Activated naive CD4-positive, alpha-beta T cell treated with anti-CD3 and anti-CD28 coated beads, Interleukin-2, amount 10 ng/mL, durations not matched to agents 7 days and 5 days (primary cell): ENCODE measurements at regions of chrX and their contacts with region 1.

Region 1: GRCh38 chrX:109485470-109486340 is 3.8 kb upstream of the GUCY2F start:
- DNase-seq: peak; percentile 68
- H3K4me3 Mint-ChIP-seq: no peak overlapping the region
- H3K27ac Mint-ChIP-seq: no peak overlapping the region
- H3K4me1 Mint-ChIP-seq: no peaks in the 10 kb centered on the region
- H3K27me3 Mint-ChIP-seq: peaks cover 4% of the 10 kb centered on the region

Region 2: GRCh38 chrX:109398833-109399232 is 86.9 kb before region 1 on chrX:
- CTCF ChIA-PET with region 1: no interaction called
- DNase-seq: no peak
- H3K4me3 Mint-ChIP-seq: no peak overlapping the region
- H3K27ac Mint-ChIP-seq: no peak overlapping the region
- H3K4me1 Mint-ChIP-seq: no peaks in the 10 kb centered on the region
- H3K27me3 Mint-ChIP-seq: no peaks in the 10 kb centered on the region

Region 3: GRCh38 chrX:109475174-109475891 is 10.4 kb before region 1 on chrX:
- CTCF ChIA-PET with region 1: interaction called, 10 read pairs
- DNase-seq: no peak
- H3K4me3 Mint-ChIP-seq: no peak overlapping the region
- H3K27ac Mint-ChIP-seq: no peak overlapping the region
- H3K4me1 Mint-ChIP-seq: peaks cover 2% of the 10 kb centered on the region
- H3K27me3 Mint-ChIP-seq: no peaks in the 10 kb centered on the region

Region 4: GRCh38 chrX:109635176-109635575 is 149.5 kb after region 1 on chrX:
- CTCF ChIA-PET with region 1: interaction called, 17 read pairs
- DNase-seq: peak; percentile 20
- H3K4me3 Mint-ChIP-seq: no peak overlapping the region
- H3K27ac Mint-ChIP-seq: no peak overlapping the region
- H3K4me1 Mint-ChIP-seq: peaks cover 27% of the 10 kb centered on the region
- H3K27me3 Mint-ChIP-seq: no peaks in the 10 kb centered on the region

Region 5: DNA sequence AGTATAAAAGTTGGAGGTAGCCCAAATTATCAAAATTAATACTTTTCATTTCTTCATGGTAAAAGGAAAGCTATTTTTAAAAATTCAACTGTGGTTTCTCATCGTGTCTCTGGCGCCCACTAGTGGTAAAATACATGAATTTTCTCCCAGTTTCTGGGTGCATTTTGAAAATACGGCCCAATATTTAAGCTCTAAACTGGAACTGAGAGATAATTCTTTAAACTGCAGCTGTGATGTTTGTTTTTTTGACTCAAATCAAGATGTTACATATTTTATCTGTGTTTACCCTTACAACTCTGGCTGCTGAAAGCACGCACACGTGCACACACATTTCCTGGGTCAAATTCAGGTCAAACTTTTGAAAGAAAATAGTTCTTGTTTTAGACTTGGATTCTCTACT is 371.3 kb after region 1 on chrX:
- CTCF ChIA-PET with region 1: interaction called, 13 read pairs
- DNase-seq: peak; percentile 20
- H3K4me3 Mint-ChIP-seq: no peak overlapping the region
- H3K27ac Mint-ChIP-seq: no peak overlapping the region
- H3K4me1 Mint-ChIP-seq: no peaks in the 10 kb centered on the region
- H3K27me3 Mint-ChIP-seq: peaks cover 3% of the 10 kb centered on the region